ENCODE measurements at regions of chr5 and their contacts with region 1.

Region 1: DNA sequence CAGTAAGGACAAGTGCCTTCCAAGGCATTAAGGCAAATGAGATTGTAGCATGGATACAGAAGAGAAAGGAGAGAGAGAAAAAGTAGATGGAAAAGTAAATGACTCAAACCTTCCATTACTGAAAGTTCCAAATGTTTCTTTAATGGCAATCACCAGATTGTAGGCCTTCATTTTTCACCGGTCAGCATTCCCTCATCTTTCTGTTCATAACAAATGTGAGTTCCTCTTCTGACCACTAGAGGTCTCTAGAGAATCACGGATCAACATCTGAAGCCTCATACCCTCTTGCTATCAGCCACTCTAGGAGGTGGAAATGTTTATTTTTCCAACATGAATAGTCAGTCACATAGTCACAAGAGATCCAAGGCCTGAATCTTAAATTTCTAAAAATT is 73.6 kb upstream of the RPS23 start:
- DNase-seq: no peak
- H3K4me3 ChIP-seq: no peak overlapping the region
- H3K27ac ChIP-seq: peak overlapping the region; percentile 68 to 89
- H3K4me1 ChIP-seq: peaks cover 12 to 57% of the 10 kb centered on the region in 2 donors
- H3K27me3 ChIP-seq: no peaks in the 10 kb centered on the region
- CTCF ChIP-seq: peak; percentile 66 to 78 (median 66)

Region 2: GRCh38 chr5:82312373-82312856 is 39.3 kb before region 1 on chr5:
- intact Hi-C with region 1: loop called (anchors 2 kb)
- DNase-seq: peak; percentile 24 to 87
- H3K4me3 ChIP-seq: peak overlapping the region; percentile 10 to 30
- H3K27ac ChIP-seq: peak overlapping the region; percentile 61 to 80
- H3K4me1 ChIP-seq: peaks cover 4 to 9% of the 10 kb centered on the region in 2 donors
- H3K27me3 ChIP-seq: no peaks in the 10 kb centered on the region
- CTCF ChIP-seq: peak; percentile 85 to 91 (median 89)

Region 3: DNA sequence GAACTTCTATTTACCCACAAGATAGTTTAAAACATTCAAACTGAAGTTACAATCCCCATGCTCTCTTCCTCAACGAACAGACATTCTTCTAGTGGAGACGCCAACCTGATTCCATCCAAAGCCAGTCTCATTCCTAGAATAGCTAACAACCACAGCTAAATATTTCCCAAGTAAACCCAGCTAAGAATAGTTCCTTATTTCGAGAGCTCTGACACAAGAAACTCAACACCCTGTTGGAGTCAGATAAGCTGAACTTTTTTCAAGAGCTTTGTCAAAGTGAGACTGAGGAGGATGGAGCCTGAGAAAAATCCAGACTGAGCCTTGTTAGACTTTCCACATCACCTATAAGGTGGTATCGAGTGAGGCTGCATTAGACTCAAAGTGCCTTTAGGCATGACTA is 16.9 kb before region 1 on chr5:
- intact Hi-C with region 1: loop called (anchors 1 kb)
- DNase-seq: no peak
- H3K4me3 ChIP-seq: no peak overlapping the region
- H3K27ac ChIP-seq: peak overlapping the region; percentile 98 to 99
- H3K4me1 ChIP-seq: peaks cover 21 to 72% of the 10 kb centered on the region in 2 donors
- H3K27me3 ChIP-seq: no peaks in the 10 kb centered on the region
- CTCF ChIP-seq: no peak

Region 4: DNA sequence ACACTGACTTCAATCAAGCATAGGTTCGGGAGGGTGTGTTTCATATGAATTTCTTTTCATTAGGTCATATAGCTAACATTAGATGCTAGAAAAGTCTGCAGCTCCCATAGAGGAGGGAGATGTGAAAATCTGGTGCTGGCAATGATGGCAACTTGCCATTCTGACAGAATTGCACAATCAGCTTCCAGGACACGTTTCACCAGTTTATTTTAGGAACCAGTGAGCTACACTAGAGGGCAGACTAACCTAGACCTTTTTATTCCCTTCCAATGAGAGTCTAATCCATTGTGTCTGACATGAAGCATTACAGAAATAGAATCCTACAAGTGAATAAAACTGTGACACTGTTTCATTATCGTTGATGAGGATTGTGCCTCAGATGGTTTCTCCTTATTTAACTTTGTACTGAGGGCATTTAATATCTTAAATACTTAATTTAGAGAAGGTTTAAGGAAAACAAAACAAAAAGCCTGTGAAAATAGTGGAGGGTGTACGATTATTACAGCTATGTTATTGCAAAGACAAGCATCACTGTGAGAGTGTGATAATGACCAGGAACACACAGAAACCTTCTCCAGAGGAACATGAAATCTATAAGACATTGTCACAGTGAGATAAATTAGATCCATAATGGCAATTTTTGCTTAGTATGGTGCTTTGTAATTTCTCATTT is 289.7 kb after region 1 on chr5:
- intact Hi-C with region 1: loop called (anchors 5 kb)
- DNase-seq: peak in 1 of 2 donors; percentile 88
- H3K4me3 ChIP-seq: no peak overlapping the region
- H3K27ac ChIP-seq: peak overlapping the region; percentile 61 to 77
- H3K4me1 ChIP-seq: peaks cover 5 to 19% of the 10 kb centered on the region in 2 donors
- H3K27me3 ChIP-seq: no peaks in the 10 kb centered on the region
- CTCF ChIP-seq: peak; percentile 62 to 80 (median 70)

Region 5: DNA sequence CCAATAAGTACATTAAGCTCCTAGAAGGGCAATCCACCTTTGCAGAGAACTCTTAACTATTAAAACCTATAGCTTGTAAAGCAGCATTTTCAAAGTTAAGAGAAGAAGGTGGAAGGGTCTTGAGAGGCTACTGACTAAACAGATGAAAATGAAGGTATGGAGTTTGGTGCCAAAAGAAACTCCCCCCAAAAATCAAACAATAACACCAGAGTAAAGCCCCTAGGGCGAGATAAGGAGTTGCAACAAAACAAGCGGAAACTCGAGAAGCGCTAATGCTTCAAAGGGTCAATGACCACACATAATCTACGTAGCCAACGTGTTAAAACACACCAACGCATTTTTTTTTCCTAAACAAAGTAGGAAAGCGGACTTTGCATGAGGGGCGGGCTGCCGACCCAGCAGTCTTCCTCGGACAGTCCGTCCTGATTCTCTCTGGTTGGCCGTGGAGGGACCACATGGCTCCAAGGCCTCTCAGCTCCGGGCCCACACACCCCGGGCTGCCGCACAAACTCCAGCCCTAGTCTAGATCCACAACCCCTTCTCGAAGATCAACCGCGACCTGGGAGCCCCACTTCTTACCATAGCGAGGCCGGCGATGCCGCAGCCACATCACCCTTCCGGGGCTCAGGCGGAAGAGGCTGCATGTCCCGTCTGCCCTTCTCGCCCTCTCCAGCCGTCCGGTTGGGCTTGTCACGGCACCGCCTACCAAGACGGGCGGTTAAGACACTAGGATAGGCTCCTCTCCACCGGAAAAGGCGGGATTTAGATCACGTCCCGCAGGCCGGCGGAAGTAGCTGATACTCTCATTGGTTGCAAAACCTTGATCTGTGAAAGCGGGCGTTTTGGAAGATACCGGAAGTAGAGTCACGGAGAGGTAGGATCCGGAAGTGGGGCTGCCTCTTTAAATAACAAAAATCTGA is 725.3 kb after region 1 on chr5 and contains the starts of genes TMEM167A and XRCC4:
- intact Hi-C with region 1: loop called (anchors 1 kb)
- DNase-seq: peak; percentile 94 to 98
- H3K4me3 ChIP-seq: peak within 1 kb of the TSS; percentile 86 to 94
- H3K27ac ChIP-seq: peak within 1 kb of the TSS; percentile 89 to 90
- H3K4me1 ChIP-seq: peaks cover 0 to 17% of the 10 kb centered on the region in 2 donors
- H3K27me3 ChIP-seq: no peaks in the 10 kb centered on the region
- CTCF ChIP-seq: no peak
- total RNA-seq, gene TMEM167A: 38.3 TPM
- total RNA-seq, gene XRCC4: not detected

Region 6: GRCh38 chr5:83306572-83307241 is 955.0 kb after region 1 on chr5:
- intact Hi-C with region 1: loop called (anchors 10 kb)
- DNase-seq: peak; percentile 51 to 83
- H3K4me3 ChIP-seq: no peak overlapping the region
- H3K27ac ChIP-seq: peak overlapping the region; percentile 72 to 76
- H3K4me1 ChIP-seq: peaks cover 0 to 8% of the 10 kb centered on the region in 2 donors
- H3K27me3 ChIP-seq: no peaks in the 10 kb centered on the region
- CTCF ChIP-seq: no peak

Region 7: DNA sequence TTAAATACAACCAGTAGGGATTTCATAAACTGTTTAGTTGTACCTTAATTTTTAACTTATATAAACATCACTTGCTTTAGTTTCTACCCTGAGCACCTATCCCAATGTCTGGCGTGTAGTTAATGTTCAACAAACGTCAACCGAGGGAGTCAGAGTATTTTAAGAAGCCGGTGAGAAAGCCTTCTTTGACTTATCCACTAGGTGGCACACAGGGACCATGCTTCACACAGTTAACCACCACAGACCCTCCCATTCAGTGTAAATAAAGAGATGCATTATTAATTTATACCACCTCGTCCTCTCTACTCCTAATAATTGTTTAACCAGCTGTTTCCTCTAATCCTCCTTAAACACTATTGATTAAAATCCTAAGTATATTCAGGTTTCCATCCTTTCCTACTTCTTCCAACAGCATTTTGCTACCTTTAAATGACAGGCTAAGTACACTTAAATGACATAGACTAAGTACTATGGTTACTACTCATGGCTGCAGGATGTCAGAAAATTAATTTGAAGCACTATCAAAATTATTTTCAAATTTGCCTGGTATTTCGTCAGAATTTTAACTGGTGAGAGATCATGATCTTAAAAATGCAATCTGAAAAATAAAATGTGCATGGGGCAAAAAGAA is 1366.6 kb after region 1 on chr5:
- intact Hi-C with region 1: loop called (anchors 10 kb)
- DNase-seq: peak in 1 of 2 donors; percentile 70
- H3K4me3 ChIP-seq: peak overlapping the region in 1 of 2 donors; percentile 5
- H3K27ac ChIP-seq: no peak overlapping the region
- H3K4me1 ChIP-seq: peaks cover 0 to 12% of the 10 kb centered on the region in 2 donors
- H3K27me3 ChIP-seq: no peaks in the 10 kb centered on the region
- CTCF ChIP-seq: peak; percentile 71 to 91 (median 77)